CD8-positive, alpha-beta T cell (primary cell): ENCODE measurements at regions of chr21 and their contacts with region 1.

Region 1: GRCh38 chr21:45287438-45288391 is at the start of gene POFUT2:
- DNase-seq: peak; percentile 94 to 100 (median 99)
- ATAC-seq: peak; percentile 85
- H3K4me3 ChIP-seq: peak within 1 kb of the TSS; percentile 70 to 83
- H3K4me3 Mint-ChIP-seq: peak within 1 kb of the TSS; percentile 85
- H3K27ac ChIP-seq: peak within 1 kb of the TSS; percentile 80 to 83
- H3K27ac Mint-ChIP-seq: peak within 1 kb of the TSS; percentile 81
- H3K4me1 ChIP-seq: peaks cover 18% of the 10 kb centered on the region
- H3K4me1 Mint-ChIP-seq: peaks cover 26% of the 10 kb centered on the region
- H3K27me3 ChIP-seq: no peaks in the 10 kb centered on the region
- H3K27me3 Mint-ChIP-seq: no peaks in the 10 kb centered on the region
- CTCF ChIP-seq: no peak
- total RNA-seq, gene POFUT2: 54.7 to 56.7 TPM

Region 2: DNA sequence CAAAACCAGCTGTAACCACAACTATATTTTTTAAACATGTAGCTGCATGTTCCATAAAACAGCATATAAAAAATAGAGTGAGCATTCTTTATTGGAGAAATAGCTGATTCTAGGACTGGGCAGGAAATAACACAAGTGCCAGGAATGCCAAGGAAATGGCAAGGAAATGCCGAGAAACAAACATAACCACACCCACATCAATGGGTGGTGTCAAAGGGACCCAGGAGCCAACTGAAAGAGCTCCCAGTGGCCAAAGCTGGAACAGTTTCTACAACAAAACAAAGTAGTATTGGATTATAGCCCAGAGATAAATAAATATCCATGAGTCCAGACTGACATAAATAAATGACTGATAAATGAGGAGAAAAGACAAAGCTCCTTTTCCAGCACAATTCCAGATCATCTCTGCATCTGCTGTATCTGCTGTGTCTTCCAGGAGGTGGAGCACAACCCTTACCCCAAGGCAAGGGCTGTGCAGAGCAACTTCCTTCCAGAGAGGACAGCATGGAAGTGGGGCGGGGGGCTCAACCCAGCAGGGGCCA is 185.3 kb before region 1 on chr21:
- CTCF ChIA-PET with region 1: no interaction called
- POLR2A ChIA-PET with region 1: no interaction called
- intact Hi-C with region 1: no loop called
- DNase-seq: no peak
- ATAC-seq: no peak
- H3K4me3 ChIP-seq: no peak overlapping the region
- H3K4me3 Mint-ChIP-seq: no peak overlapping the region
- H3K27ac ChIP-seq: no peak overlapping the region
- H3K27ac Mint-ChIP-seq: no peak overlapping the region
- H3K4me1 ChIP-seq: peaks cover 14% of the 10 kb centered on the region
- H3K4me1 Mint-ChIP-seq: peaks cover 63% of the 10 kb centered on the region
- H3K27me3 ChIP-seq: no peaks in the 10 kb centered on the region
- H3K27me3 Mint-ChIP-seq: no peaks in the 10 kb centered on the region
- CTCF ChIP-seq: no peak

Region 3: DNA sequence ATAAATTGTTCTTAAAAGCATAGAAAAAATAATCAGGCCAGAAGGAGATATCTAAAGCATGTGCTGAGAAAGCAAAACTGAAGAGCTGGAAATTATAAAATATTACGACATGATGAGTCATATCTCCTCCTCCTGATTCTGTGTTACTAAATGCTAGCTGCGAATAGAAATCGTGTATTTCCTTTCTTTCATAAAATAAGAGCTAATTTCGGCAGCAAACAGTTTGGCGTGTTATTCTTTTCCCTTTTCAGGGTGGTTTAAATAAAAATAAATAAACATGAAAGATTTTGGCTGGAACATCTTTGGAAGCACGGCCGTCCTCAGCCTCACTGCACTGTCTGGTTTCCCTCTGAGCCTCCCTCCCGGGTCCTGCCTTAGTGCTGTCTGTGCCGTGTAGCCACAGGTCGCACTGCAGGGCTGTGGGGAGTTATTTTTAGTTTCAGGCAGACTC is 157.4 kb before region 1 on chr21:
- CTCF ChIA-PET with region 1: no interaction called
- POLR2A ChIA-PET with region 1: no interaction called
- intact Hi-C with region 1: no loop called
- DNase-seq: no peak
- ATAC-seq: no peak
- H3K4me3 ChIP-seq: no peak overlapping the region
- H3K4me3 Mint-ChIP-seq: no peak overlapping the region
- H3K27ac ChIP-seq: no peak overlapping the region
- H3K27ac Mint-ChIP-seq: no peak overlapping the region
- H3K4me1 ChIP-seq: peaks cover 5% of the 10 kb centered on the region
- H3K4me1 Mint-ChIP-seq: peaks cover 21% of the 10 kb centered on the region
- H3K27me3 ChIP-seq: no peaks in the 10 kb centered on the region
- H3K27me3 Mint-ChIP-seq: no peaks in the 10 kb centered on the region
- CTCF ChIP-seq: no peak

Region 4: DNA sequence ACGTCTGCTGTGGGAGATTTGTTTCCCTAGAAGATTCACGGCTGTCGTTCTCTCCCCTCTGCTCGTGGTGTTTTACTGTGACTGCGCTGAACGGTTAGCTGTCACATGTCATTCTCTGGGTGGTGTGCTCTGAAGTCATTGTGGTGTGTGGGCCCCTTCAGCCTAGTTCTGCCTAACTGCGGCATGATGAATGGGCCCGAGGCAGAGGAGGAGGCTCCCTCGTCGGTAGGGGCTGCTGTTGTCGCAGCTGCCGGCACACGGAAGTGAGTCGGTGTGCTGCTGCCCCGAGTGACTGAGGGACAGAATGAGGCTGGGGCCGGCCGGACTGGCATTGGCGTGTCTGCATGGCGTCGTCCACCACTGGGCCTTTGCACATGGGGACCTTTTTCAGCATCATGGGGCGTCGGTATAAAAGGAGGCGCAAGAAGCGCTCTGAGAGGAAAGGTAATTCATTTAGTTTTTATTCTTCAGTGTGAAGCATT is 135.4 kb before region 1 on chr21:
- CTCF ChIA-PET with region 1: interaction called, 6 read pairs
- POLR2A ChIA-PET with region 1: no interaction called
- intact Hi-C with region 1: loop called (anchors 1 to 5 kb)
- DNase-seq: peak; percentile 47 to 88 (median 73)
- ATAC-seq: peak; percentile 95
- H3K4me3 ChIP-seq: no peak overlapping the region
- H3K4me3 Mint-ChIP-seq: peak overlapping the region; percentile 70
- H3K27ac ChIP-seq: peak overlapping the region; percentile 11 to 21
- H3K27ac Mint-ChIP-seq: peak overlapping the region; percentile 79
- H3K4me1 ChIP-seq: peaks cover 39% of the 10 kb centered on the region
- H3K4me1 Mint-ChIP-seq: peaks cover 35% of the 10 kb centered on the region
- H3K27me3 ChIP-seq: no peaks in the 10 kb centered on the region
- H3K27me3 Mint-ChIP-seq: no peaks in the 10 kb centered on the region
- CTCF ChIP-seq: peak; percentile 54

Region 5: GRCh38 chr21:45228171-45228641 is 59.5 kb before region 1 on chr21:
- CTCF ChIA-PET with region 1: no interaction called
- POLR2A ChIA-PET with region 1: no interaction called
- intact Hi-C with region 1: no loop called
- DNase-seq: peak; percentile 53 to 95 (median 73)
- ATAC-seq: peak; percentile 65
- H3K4me3 ChIP-seq: no peak overlapping the region
- H3K4me3 Mint-ChIP-seq: no peak overlapping the region
- H3K27ac ChIP-seq: peak overlapping the region in 1 of 2 experiments; percentile 48
- H3K27ac Mint-ChIP-seq: peak overlapping the region; percentile 85
- H3K4me1 ChIP-seq: peaks cover 25% of the 10 kb centered on the region
- H3K4me1 Mint-ChIP-seq: peaks cover 36% of the 10 kb centered on the region
- H3K27me3 ChIP-seq: peaks cover 0 to 2% of the 10 kb centered on the region in 2 experiments
- H3K27me3 Mint-ChIP-seq: no peaks in the 10 kb centered on the region
- CTCF ChIP-seq: no peak

Region 6: DNA sequence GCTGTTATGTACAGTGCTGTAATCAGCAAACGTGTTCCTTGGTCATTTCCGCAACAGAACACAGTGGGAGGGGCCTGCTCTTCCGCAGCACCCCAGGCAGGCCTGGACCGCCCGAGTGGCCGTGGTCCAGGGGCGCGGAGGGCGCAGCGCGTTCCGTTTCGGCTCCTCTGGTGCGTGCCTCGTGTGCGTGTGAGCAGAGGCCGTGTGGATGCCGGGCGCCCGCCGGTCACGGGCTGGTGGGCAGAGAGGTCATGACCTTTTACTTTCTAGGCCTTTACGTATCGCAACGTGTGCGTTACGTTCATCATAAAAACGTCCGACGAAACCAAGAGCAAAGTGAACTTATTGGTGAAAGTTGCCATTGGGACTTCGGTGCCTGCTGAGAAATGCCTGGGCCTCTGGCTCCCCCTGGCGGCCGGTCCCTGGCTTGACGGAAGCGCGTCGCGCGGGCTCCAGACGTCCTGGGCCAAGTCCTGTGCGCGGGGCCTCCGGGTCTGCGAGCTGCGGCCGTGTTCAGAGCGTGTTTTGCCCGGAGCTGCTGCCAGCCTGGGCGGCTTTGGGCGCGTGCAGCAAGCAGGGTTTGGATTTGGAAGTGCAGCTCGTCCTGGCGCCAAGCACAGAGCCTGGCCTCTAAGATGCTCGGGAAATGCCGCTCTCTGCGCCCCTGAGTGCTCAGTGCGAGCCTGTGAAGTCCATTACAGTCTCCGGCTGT is 151.6 kb after region 1 on chr21:
- CTCF ChIA-PET with region 1: interaction called, 38 read pairs
- POLR2A ChIA-PET with region 1: no interaction called
- intact Hi-C with region 1: loop called (anchors 1 kb)
- DNase-seq: peak; percentile 71 to 93 (median 86)
- ATAC-seq: peak; percentile 87
- H3K4me3 ChIP-seq: peak overlapping the region; percentile 26 to 29
- H3K4me3 Mint-ChIP-seq: peak overlapping the region; percentile 65
- H3K27ac ChIP-seq: peak overlapping the region in 1 of 2 experiments; percentile 40
- H3K27ac Mint-ChIP-seq: no peak overlapping the region
- H3K4me1 ChIP-seq: peaks cover 6% of the 10 kb centered on the region
- H3K4me1 Mint-ChIP-seq: peaks cover 6% of the 10 kb centered on the region
- H3K27me3 ChIP-seq: peaks cover 0 to 9% of the 10 kb centered on the region in 2 experiments
- H3K27me3 Mint-ChIP-seq: peaks cover 11% of the 10 kb centered on the region
- CTCF ChIP-seq: peak; percentile 90

Region 7: GRCh38 chr21:45820171-45821091 is 532.7 kb after region 1 on chr21:
- CTCF ChIA-PET with region 1: interaction called, 7 read pairs
- POLR2A ChIA-PET with region 1: no interaction called
- intact Hi-C with region 1: loop called (anchors 1 to 5 kb)
- DNase-seq: peak; percentile 54 to 86 (median 82)
- ATAC-seq: peak; percentile 72
- H3K4me3 ChIP-seq: no peak overlapping the region
- H3K4me3 Mint-ChIP-seq: no peak overlapping the region
- H3K27ac ChIP-seq: no peak overlapping the region
- H3K27ac Mint-ChIP-seq: peak overlapping the region; percentile 21
- H3K4me1 ChIP-seq: peaks cover 3% of the 10 kb centered on the region
- H3K4me1 Mint-ChIP-seq: peaks cover 18% of the 10 kb centered on the region
- H3K27me3 ChIP-seq: no peaks in the 10 kb centered on the region
- H3K27me3 Mint-ChIP-seq: peaks cover 5% of the 10 kb centered on the region
- CTCF ChIP-seq: peak; percentile 80